HEK293T (cell line): ENCODE measurements at regions of chr1 and their contacts with region 1.

Region 1: GRCh38 chr1:24932284-24932683 is 2.2 kb upstream of the RUNX3 start:
- DNase-seq: peak; percentile 87

Region 2: DNA sequence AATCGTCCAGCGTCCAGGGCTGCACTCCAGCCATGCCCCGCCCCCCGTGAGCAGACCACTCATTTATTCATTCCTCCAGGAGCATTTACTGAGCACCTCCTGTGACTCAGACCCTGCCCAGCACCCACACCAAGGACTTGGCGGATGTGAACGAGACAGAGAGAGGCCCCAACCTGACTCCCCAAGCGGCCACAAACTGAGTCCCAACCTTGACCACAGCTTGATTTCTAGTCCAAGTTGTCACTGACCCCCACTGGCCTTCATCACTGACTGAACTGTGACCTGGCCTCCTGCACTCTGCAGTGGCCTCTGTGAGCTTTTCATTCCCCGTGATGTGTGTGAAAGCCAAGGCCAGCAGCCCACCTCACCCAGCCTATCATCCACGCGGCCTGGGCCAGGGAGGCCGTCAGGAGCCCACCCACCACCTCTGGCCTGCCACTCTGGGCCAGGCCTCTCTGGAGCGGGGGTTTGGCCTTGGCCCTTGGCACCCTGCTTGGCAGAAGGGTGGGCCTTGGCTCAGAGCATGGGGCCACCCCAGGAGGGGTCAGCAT is 17.1 kb after region 1 on chr1:
- CTCF ChIA-PET with region 1: no interaction called
- POLR2A ChIA-PET with region 1: no interaction called
- DNase-seq: no peak

Region 3: DNA sequence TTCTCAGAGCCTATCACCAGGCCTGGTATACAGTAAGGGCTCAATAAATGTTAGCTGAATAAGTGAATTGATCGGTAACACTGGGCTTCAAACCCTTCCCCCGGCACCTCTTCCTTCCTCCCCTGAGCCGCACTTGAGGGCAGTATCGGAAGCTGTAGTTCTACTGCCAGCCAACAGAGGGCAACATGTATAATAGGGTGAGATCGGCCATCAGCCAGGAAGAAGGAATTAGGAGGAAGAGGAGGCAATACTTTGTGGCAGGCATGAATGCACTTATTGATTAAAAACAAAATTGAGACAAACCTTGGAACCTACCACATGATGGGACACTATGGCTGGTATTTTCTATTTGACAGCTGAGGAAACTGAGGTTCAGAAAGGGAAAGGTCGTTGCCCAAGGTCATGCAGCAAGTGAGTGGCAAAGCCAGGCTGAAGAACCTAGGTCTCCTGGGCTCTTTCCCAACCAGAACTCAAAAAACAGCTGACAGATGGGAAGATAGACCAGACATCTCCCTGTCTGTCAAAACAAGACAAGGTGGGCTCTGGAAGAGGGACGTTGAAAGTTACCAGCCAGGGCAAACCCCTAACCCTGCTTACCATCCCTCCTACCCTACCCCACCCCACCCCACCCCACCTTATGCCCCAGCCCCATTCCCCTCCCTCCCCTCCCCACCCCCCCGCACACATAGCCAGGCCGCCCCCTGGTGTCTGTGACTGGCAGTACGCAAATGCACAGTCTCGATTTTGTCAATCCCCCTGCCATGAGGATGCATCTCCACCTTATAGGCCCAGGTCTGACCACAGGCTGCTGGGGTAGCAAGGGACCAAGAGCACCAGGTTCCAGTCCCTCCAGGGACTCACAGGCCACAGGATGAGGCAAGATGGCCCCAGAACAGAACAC is 105.1 kb after region 1 on chr1:
- CTCF ChIA-PET with region 1: interaction called, 13 read pairs
- POLR2A ChIA-PET with region 1: no interaction called
- DNase-seq: peak; percentile 77

Region 4: GRCh38 chr1:25100151-25100833 is 168.0 kb after region 1 on chr1:
- CTCF ChIA-PET with region 1: interaction called, 10 read pairs
- POLR2A ChIA-PET with region 1: no interaction called
- DNase-seq: no peak